Prostate gland (tissue), 2 donors: ENCODE measurements at regions of chr2 and their contacts with region 1.

Region 1: DNA sequence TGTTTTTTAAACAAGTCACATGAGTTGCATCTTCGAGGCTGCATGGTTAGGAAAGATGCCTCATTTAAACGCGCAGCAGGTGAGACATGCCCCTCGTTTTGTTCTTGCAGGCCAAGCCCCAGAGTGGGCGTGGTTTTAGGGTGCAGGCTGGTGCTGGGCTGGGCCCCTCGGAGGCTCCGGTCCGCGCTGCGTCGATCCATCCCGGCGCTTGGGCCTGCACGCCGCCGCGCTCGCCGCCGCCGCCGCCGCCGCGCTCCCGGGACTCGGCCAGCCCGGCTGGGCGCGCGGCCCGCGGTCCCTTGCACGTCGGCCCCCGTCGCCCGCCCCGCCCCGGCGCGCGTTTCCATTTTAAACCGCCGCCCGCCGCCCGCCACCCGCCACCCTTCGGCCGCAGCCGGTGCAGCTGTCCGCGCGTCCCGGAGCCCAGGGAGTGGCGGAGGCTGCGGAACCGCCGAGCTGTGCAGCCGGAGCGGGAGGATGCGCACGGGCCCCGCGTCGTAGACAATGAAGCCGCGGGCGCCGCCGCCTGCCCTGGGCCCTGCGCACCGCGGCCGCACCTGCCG is 175.5 kb downstream of the AGAP1 start:
- DNase-seq: peak; percentile 30
- H3K4me3 ChIP-seq: peak overlapping the region; percentile 48 to 50
- H3K27ac ChIP-seq: no peak overlapping the region
- H3K4me1 ChIP-seq: peaks cover 8% of the 10 kb centered on the region
- H3K27me3 ChIP-seq: no peaks in the 10 kb centered on the region
- CTCF ChIP-seq: no peak
- POLR2A ChIP-seq: no peak

Region 2: GRCh38 chr2:234989183-234989701 is 680.1 kb before region 1 on chr2:
- intact Hi-C with region 1: no loop called
- DNase-seq: peak; percentile 90
- H3K4me3 ChIP-seq: no peak overlapping the region
- H3K27ac ChIP-seq: peak overlapping the region; percentile 57 to 64
- H3K4me1 ChIP-seq: peaks cover 20% of the 10 kb centered on the region
- H3K27me3 ChIP-seq: no peaks in the 10 kb centered on the region
- CTCF ChIP-seq: no peak
- POLR2A ChIP-seq: no peak

Region 3: DNA sequence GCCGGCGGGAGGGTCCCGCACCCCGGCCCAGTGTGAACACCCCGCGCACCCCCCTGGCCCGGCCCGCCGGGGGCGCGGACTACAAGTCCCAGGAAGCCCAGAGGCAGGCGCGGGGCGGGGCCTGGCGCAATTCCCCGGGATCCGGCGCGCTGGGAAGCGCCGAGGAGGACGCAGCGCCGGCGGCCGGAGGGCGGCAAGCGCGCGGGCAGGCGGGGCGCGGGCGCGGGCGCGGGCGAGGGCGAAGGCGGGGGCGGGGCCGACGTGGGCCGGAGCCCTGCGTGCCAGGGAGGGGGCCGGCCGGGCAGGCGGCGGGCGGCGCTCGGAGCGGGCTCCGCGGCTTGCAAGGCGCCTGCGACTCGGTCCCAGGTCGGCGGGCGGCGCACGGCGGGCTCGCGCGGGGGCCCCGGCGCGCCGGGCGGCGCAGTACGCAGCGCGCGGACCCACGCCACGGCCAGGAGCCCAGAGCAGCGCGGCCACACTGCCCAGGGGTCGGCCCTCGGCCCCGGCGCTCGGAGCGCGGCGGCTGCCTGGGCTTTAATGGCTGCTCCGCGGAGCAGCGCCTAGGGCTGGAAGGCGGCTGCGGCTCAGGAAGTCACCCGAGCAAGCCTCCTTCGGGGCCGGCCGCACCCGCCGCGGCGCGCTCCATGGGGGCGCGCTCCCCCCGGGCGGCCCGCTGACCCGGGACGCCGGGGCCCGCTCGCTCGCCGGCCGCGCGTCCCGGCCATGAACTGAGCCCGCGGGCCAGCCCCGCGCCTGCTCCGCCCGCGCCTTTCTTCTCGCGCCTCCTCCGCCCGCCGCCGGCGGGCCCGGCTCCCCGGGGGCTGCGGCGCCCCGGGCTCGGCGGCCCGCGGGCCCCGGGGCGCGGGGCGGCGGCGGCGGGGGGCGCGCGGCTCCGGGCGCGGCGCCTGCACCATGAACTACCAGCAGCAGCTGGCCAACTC is 175.3 kb before region 1 on chr2 and contains the start of gene AGAP1:
- intact Hi-C with region 1: loop called (anchors 10 kb)
- DNase-seq: peak; percentile 88
- H3K4me3 ChIP-seq: peak within 1 kb of the TSS; percentile 50 to 63
- H3K27ac ChIP-seq: peak within 1 kb of the TSS; percentile 69 to 88
- H3K4me1 ChIP-seq: peaks cover 2% of the 10 kb centered on the region
- H3K27me3 ChIP-seq: no peaks in the 10 kb centered on the region
- CTCF ChIP-seq: no peak
- POLR2A ChIP-seq: peak; percentile 23
- total RNA-seq, gene AGAP1: 16.1 to 40.1 TPM

Region 4: GRCh38 chr2:235595422-235596010 is 73.8 kb before region 1 on chr2:
- intact Hi-C with region 1: loop called (anchors 2 kb)
- DNase-seq: peak; percentile 53
- H3K4me3 ChIP-seq: no peak overlapping the region
- H3K27ac ChIP-seq: no peak overlapping the region
- H3K4me1 ChIP-seq: no peaks in the 10 kb centered on the region
- H3K27me3 ChIP-seq: no peaks in the 10 kb centered on the region
- CTCF ChIP-seq: peak; percentile 79 to 82 (median 82)
- POLR2A ChIP-seq: no peak

Region 5: GRCh38 chr2:235746257-235747084 is 77.1 kb after region 1 on chr2:
- intact Hi-C with region 1: loop called (anchors 2 kb)
- DNase-seq: peak; percentile 69
- H3K4me3 ChIP-seq: no peak overlapping the region
- H3K27ac ChIP-seq: no peak overlapping the region
- H3K4me1 ChIP-seq: no peaks in the 10 kb centered on the region
- H3K27me3 ChIP-seq: no peaks in the 10 kb centered on the region
- CTCF ChIP-seq: peak; percentile 58 to 80 (median 70)
- POLR2A ChIP-seq: no peak

Region 6: GRCh38 chr2:235757212-235757611 is 87.9 kb after region 1 on chr2:
- intact Hi-C with region 1: no loop called
- DNase-seq: no peak
- H3K4me3 ChIP-seq: no peak overlapping the region
- H3K27ac ChIP-seq: no peak overlapping the region
- H3K4me1 ChIP-seq: no peaks in the 10 kb centered on the region
- H3K27me3 ChIP-seq: no peaks in the 10 kb centered on the region
- CTCF ChIP-seq: no peak
- POLR2A ChIP-seq: no peak

Region 7: GRCh38 chr2:236045251-236046235 is 376.2 kb after region 1 on chr2:
- intact Hi-C with region 1: no loop called
- DNase-seq: no peak
- H3K4me3 ChIP-seq: no peak overlapping the region
- H3K27ac ChIP-seq: no peak overlapping the region
- H3K4me1 ChIP-seq: no peaks in the 10 kb centered on the region
- H3K27me3 ChIP-seq: no peaks in the 10 kb centered on the region
- CTCF ChIP-seq: no peak
- POLR2A ChIP-seq: no peak